ENCODE measurements at regions of chr11 and their contacts with region 1.

Region 1: DNA sequence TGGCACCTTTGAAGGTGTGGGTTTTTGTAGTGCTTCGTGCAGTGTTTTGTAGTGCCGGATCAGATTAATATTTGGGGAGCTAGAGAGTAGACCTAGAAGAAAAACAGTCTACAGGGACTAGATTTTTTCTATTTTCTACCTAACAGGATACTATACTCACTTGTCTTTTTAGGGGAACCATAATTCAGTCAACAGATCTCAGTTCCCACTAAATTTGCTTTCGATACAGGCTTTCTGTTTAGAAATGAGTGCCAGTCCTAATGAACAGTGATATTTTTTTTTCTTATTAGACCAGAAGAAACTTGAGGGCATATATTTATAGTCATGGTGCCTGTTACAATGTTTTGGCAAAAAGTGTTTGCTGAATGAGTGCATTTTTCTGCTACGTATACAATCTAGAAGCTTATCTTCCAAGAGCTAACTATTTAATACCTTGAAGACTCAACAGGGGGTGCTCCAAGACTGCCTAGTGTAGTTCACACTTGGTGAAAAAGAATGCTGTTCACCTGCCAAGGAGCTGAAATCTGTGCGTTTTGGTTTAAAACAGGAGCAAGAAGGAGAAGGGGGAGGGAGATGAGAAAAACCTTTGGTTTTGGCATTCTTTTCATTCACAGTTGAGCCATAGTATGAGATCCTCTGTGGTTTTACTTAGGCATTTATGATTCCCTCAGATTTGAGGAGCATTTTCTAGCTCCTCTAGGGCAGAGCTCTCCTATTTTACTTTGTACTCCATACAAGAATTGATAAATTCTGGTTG is 44.9 kb upstream of the VSTM5 start:
- H3K4me3 ChIP-seq: no peak overlapping the region
- H3K27ac ChIP-seq: no peak overlapping the region
- H3K4me1 ChIP-seq: no peaks in the 10 kb centered on the region
- CTCF ChIP-seq: peak; percentile 50; the same call in 1 of the 2 replicates

Region 2: DNA sequence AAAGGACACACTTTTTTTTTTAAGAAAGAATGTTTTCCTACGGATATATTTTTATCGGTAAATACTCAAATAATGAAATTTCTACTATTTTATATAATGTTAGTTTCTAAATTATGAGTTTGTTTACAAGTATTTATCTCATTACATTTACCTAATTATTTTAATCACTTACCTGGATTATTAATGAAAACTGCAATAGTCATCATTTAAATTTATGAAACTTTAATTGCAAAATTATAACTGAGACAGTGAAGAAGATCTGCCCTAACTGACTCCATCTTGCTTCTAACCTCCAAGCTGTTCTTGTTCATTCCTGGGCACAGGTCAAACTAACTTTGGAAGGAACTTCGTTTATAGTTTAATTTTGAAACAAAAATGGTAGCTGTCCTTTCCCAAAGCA is 19.6 kb before region 1 on chr11:
- CTCF ChIA-PET with region 1: interaction called, 15 read pairs
- POLR2A ChIA-PET with region 1: no interaction called
- H3K4me3 ChIP-seq: no peak overlapping the region
- H3K27ac ChIP-seq: no peak overlapping the region
- H3K4me1 ChIP-seq: no peaks in the 10 kb centered on the region
- CTCF ChIP-seq: no peak

Region 3: GRCh38 chr11:93921695-93922468 is 26.6 kb after region 1 on chr11:
- CTCF ChIA-PET with region 1: interaction called, 34 read pairs
- POLR2A ChIA-PET with region 1: no interaction called
- H3K4me3 ChIP-seq: no peak overlapping the region
- H3K27ac ChIP-seq: no peak overlapping the region
- H3K4me1 ChIP-seq: no peaks in the 10 kb centered on the region
- CTCF ChIP-seq: peak; percentile 40

Region 4: GRCh38 chr11:94002226-94002625 is 106.9 kb after region 1 on chr11:
- CTCF ChIA-PET with region 1: no interaction called
- POLR2A ChIA-PET with region 1: no interaction called
- H3K4me3 ChIP-seq: no peak overlapping the region
- H3K27ac ChIP-seq: no peak overlapping the region
- H3K4me1 ChIP-seq: no peaks in the 10 kb centered on the region
- CTCF ChIP-seq: no peak

Region 5: DNA sequence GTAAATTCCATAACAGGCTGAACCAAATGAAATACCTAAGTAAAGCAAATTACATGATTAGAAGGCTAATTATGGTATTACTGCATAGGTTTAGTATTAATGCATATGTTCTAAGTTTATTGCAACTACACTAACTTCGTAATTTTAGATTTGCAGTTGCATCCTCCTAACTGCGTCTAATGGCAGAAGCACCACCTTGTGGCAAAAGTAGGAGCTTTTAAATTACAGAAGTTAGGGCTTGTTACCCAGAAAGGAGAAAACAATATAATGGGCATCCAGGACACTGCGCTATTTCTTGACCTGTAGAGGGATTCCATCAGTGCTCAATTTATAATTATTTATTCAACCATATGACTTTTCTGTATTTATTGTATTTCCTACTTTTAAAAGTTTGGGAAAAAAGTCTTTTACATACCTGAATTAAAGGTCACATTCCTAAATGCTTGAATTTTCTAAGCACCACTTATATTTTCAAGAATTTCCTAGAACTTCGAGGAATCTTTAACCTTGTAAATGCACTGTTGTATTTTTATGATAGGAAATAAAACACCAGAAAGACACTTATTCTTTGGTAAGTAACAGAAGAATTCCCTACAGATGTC is 522.2 kb after region 1 on chr11:
- CTCF ChIA-PET with region 1: interaction called, 15 read pairs
- POLR2A ChIA-PET with region 1: no interaction called
- H3K4me3 ChIP-seq: no peak overlapping the region
- H3K27ac ChIP-seq: no peak overlapping the region
- H3K4me1 ChIP-seq: no peaks in the 10 kb centered on the region
- CTCF ChIP-seq: no peak

Region 6: DNA sequence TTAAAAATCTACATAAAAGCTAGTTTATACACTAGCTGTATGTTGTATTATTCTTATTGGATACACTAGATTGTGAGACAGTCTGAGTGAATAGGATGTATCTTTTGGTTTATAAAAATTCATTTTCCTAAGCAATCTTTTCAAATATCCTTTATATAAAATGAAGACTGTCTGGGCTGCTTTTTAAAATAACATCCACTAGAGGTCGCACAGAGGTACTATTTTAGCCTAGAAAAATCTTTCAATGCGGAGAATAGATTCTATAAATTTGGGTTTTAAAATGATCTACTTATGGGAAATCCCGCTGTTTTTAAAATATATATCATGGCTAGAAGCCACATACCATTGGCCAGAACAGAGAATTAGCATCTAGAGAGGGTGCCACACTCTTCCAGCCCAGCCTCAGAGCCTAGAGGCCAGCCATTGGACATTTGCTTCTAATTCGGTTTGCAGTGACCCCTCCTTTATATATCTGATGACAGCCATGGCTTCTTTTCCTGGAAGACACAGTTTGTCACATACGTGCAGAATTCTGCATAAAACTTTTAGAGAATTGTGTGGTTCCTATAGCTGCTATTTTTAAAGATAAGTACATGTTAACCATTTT is 624.3 kb after region 1 on chr11:
- CTCF ChIA-PET with region 1: interaction called, 10 read pairs
- POLR2A ChIA-PET with region 1: no interaction called
- H3K4me3 ChIP-seq: no peak overlapping the region
- H3K27ac ChIP-seq: no peak overlapping the region
- H3K4me1 ChIP-seq: no peaks in the 10 kb centered on the region
- CTCF ChIP-seq: no peak

Measured in HEK293 (cell line).